ENCODE measurements at regions of chr13 and their contacts with region 1.

Region 1: DNA sequence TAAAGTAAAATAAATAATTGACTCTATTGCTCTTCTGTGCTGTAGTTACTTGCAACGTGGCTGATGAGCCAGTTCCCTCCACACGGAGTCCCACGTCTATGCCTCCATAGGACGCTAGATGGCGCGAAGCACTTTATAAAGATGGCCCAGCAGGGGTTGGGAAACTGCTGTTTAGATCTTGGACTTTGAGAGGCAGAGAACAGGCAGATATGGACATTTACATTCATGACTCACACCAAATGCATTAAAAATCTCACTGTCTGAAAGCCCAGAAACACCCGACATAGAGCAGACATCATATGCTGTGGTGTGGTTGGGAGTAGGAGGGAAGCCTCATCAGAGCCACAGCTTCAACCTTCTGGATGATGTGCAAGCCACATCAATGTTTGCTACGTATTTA is 643.1 kb upstream of the ARGLU1 start:
- DNase-seq: peak; percentile 42
- ATAC-seq: peak; percentile 92
- H3K4me3 ChIP-seq: no peak overlapping the region
- H3K27ac ChIP-seq: no peak overlapping the region
- H3K4me1 ChIP-seq: no peaks in the 10 kb centered on the region
- H3K27me3 ChIP-seq: no peaks in the 10 kb centered on the region
- CTCF ChIP-seq: peak; percentile 76

Region 2: DNA sequence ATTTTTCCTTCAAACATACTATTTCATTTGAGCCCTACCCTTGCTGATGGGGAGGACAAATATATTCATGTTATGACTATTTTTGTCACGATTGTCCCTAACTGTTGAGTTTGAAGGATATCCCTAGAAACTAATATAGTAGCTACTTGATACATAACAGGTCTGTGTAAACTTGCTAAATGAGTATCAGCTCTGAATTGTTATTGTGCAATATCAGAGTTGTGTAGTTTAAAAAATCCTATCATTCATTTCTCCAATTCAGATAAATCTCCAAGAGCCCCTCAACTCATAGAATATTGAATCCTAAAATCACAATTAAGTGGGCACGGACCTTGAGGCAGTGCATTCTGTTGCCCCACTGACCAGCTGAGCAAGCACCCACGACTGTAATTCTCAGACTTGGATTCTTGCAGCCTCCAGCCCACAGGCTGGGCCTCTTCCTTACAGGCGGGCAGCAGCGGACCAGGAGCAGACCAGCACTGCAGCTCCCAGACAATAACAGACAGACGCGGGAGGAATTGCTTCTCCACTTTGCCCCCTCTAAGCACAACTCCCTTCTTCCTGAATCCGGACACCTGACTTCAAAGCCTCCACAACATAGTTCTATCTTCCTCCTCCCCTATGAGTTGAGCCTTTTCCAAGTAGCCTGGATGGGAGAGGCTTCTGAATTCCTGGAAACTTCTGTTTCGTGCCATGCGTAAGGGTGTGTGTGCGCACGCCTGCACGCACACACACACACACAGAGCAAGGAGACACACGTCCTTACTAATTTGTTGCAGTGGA is 305.5 kb before region 1 on chr13:
- CTCF ChIA-PET with region 1: no interaction called
- POLR2A ChIA-PET with region 1: no interaction called
- in situ Hi-C with region 1: no loop called
- intact Hi-C with region 1: no loop called
- DNase-seq: no peak
- ATAC-seq: no peak
- H3K4me3 ChIP-seq: no peak overlapping the region
- H3K27ac ChIP-seq: no peak overlapping the region
- H3K4me1 ChIP-seq: no peaks in the 10 kb centered on the region
- H3K27me3 ChIP-seq: no peaks in the 10 kb centered on the region; the same call in 1 of the 2 replicates
- CTCF ChIP-seq: no peak

Region 3: GRCh38 chr13:107650081-107650701 is 439.1 kb after region 1 on chr13:
- CTCF ChIA-PET with region 1: no interaction called
- POLR2A ChIA-PET with region 1: no interaction called
- in situ Hi-C with region 1: no loop called
- intact Hi-C with region 1: loop called (anchors 5 kb)
- DNase-seq: peak; percentile 20
- ATAC-seq: no peak
- H3K4me3 ChIP-seq: no peak overlapping the region
- H3K27ac ChIP-seq: no peak overlapping the region
- H3K4me1 ChIP-seq: no peaks in the 10 kb centered on the region
- H3K27me3 ChIP-seq: no peaks in the 10 kb centered on the region
- CTCF ChIP-seq: peak; percentile 64

Region 4: DNA sequence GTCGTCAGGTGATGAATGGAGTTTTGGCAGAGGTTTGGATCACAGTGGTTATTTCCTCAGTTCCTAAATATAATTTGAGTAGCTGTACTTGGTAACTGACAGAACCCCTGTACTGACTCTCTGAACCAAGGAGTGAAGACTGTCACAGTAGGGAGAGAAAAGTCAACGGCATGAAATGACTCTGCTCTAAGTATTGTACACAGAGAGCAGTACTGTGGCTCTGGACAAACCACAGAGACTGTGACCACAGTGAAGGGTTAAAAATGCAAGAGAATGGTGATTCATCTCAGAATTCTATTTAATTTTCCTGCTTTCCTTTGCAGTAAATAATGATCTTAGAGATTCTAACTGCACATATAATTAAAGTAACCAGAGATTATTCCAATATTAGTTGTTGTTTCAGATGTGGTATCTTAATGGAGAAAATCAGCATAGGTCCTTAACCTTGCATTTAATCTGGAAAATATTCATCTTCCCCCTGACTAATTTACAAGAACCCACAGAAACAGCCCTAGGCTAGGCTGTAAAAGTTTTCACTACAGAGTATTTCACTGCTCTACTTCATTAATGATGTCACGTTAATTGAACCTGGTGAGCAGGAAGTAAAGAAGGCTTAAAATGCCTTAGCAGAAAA is 782.3 kb after region 1 on chr13:
- CTCF ChIA-PET with region 1: no interaction called
- POLR2A ChIA-PET with region 1: interaction called, 10 read pairs
- in situ Hi-C with region 1: no loop called
- intact Hi-C with region 1: no loop called
- DNase-seq: no peak
- ATAC-seq: no peak
- H3K4me3 ChIP-seq: no peak overlapping the region
- H3K27ac ChIP-seq: no peak overlapping the region
- H3K4me1 ChIP-seq: no peaks in the 10 kb centered on the region
- H3K27me3 ChIP-seq: no peaks in the 10 kb centered on the region
- CTCF ChIP-seq: no peak

Region 5: GRCh38 chr13:108003607-108004006 is 792.5 kb after region 1 on chr13:
- CTCF ChIA-PET with region 1: no interaction called
- POLR2A ChIA-PET with region 1: no interaction called
- in situ Hi-C with region 1: no loop called
- intact Hi-C with region 1: no loop called
- DNase-seq: no peak
- ATAC-seq: no peak
- H3K4me3 ChIP-seq: no peak overlapping the region
- H3K27ac ChIP-seq: no peak overlapping the region
- H3K4me1 ChIP-seq: no peaks in the 10 kb centered on the region
- H3K27me3 ChIP-seq: no peaks in the 10 kb centered on the region
- CTCF ChIP-seq: no peak